HEK293T (cell line): ENCODE measurements at regions of chr6 and their contacts with region 1.

Region 1: DNA sequence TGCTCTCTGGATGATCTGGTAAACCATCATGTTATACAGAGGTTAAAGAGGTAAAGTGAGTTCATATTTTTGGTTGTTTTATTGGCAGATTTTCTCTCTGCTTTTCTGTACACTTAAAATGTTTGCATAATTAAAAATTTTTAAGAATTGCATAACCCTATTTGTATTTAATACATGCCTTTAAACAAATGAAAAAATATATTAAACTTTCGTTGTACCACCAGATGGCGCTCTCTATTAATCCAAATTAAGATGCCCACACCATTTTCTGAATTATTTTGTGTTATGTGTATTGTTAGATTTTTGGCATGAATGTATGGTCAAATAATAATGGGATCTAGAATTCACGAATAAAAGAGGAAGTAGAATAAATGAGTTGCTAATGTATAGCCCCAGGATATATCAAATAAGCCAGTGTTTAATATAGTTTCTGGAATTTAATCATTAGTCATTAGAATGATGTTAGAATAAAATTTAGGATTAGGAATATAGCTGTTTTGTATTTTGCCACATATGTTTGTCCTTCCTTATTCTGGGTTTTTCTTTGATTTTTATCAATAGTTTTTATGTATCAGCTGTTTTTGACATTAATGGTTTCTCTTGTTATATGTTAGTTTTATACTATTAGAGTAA is 38.9 kb downstream of the SMAP1 start:
- DNase-seq: no peak

Region 2: DNA sequence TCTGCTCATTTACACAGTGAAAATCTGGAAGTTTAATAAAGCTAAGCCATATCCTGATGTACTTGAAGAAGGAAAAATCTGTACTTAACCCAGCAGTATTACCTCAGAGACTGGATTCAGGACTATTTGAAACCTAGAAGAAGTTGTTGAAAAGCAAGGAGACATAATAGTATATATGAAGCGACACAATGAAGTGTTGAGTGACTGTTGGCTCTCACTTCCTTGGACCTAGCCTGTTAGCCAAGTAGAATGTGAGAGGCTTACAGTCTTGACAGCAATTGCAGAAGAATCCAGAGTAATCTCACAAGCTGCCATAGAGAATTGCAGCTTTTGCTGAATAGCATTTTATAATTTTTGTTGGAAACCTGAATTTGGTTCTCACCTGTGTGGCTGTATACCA is 12.2 kb before region 1 on chr6:
- CTCF ChIA-PET with region 1: no interaction called
- POLR2A ChIA-PET with region 1: no interaction called
- DNase-seq: no peak

Region 3: DNA sequence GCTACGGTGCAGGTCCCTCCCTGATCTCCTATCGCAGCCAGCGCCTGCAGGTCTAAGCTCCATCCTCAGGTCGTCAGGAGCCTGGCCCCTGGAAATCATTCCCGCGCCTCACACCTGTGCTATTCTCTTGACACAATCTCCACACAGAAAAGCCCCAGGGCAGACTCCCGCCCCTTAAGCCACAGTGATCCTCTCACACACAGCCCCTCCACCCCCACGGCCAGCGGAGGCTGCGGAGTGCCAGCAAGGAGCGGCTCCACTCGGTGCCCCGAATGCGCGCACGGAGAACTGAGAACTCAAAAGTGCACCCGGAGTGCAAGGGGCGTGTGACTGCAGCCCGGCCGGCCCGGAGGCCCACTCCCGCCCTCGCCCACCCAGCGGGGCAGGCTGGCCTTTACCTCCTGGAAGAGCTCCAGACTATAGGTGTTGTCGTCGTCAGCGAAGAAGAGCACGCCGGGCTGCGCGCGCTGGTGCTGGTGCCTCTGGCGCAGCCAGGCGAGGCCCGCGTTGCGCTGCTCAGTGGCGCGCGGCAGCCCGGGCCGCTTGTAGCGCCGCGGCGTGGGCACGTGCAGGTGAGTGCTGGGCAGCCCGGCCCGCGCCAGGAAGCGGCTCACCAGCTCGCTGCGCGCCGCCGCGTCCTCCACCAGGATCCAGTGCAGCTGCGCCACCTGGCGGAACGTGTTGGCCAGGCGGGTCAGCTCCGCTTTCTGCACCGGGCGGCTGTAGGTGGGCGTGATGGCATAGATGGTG is 249.0 kb after region 1 on chr6:
- CTCF ChIA-PET with region 1: interaction called, 10 read pairs
- POLR2A ChIA-PET with region 1: no interaction called
- DNase-seq: peak; percentile 85